ENCODE measurements at regions of chr2 and their contacts with region 1.

Region 1: DNA sequence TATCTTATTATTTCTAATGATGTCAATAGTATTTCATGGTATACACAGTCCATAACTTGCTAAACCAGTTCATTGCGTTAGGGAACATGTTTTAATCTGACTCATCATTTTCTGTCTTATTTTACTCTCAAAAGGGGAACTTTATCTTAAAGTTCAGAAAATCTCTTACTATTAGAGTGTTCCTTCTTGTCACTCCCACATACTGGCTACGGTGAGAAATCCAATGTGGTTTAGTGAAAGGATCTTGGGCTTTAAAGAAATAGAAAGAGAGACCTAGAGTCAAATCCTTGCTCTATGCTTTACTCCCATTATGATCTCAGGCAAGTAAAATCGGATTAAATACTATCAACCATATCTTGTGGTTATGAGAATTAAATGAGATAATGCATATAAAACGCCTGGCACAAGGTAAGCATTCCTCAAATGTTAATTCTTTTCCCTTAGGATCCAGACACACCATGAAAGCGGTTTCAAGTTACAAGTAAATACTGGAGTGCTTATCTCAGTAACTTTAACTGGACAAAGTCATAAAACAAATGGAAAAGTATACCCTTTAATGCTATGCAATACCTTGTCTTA is 576.0 kb downstream of the ARHGAP15 start:
- DNase-seq: no peak
- ATAC-seq: peak; percentile 35
- H3K4me3 Mint-ChIP-seq: no peak overlapping the region
- H3K27ac Mint-ChIP-seq: peak overlapping the region; percentile 25
- H3K4me1 Mint-ChIP-seq: peaks cover 43% of the 10 kb centered on the region
- H3K27me3 Mint-ChIP-seq: no peaks in the 10 kb centered on the region

Region 2: GRCh38 chr2:143345887-143346787 is 359.1 kb before region 1 on chr2:
- CTCF ChIA-PET with region 1: no interaction called
- POLR2A ChIA-PET with region 1: no interaction called
- intact Hi-C with region 1: no loop called
- DNase-seq: no peak
- ATAC-seq: no peak
- H3K4me3 Mint-ChIP-seq: no peak overlapping the region
- H3K27ac Mint-ChIP-seq: no peak overlapping the region
- H3K4me1 Mint-ChIP-seq: peaks cover 25% of the 10 kb centered on the region
- H3K27me3 Mint-ChIP-seq: no peaks in the 10 kb centered on the region

Region 3: DNA sequence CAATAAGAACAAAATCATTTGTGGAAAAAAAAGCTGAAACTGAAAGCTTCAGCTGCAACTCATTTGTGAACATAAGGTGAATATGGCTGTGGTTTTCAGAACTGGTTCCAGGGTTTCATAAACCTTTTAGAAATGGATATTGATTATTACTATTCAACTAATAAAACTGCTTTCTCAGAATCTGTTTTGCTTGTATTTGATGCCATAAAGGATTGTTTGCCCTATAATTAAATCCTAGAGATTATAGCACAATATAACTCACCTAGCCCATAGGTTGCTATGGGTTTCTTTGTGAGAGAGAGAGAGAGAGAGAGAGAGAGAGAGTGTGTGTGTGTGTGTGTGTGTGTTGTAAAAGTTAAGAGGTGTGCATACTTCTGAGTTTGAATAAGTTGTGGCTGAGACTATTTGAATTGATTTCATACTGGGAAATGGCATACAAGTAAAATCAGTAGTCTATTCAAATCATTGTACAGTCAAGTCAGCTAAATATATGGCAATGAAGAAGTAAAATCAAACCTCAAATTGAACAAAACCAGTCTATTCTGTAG is 236.8 kb before region 1 on chr2:
- CTCF ChIA-PET with region 1: no interaction called
- POLR2A ChIA-PET with region 1: no interaction called
- intact Hi-C with region 1: loop called (anchors 1 to 2 kb)
- DNase-seq: no peak
- ATAC-seq: peak; percentile 83
- H3K4me3 Mint-ChIP-seq: no peak overlapping the region
- H3K27ac Mint-ChIP-seq: peak overlapping the region; percentile 52
- H3K4me1 Mint-ChIP-seq: peaks cover 39% of the 10 kb centered on the region
- H3K27me3 Mint-ChIP-seq: no peaks in the 10 kb centered on the region

Region 4: GRCh38 chr2:143730155-143730952 is 25.2 kb after region 1 on chr2:
- CTCF ChIA-PET with region 1: no interaction called
- POLR2A ChIA-PET with region 1: no interaction called
- intact Hi-C with region 1: loop called (anchors 1 kb)
- DNase-seq: peak; percentile 45
- ATAC-seq: peak; percentile 94
- H3K4me3 Mint-ChIP-seq: peak overlapping the region; percentile 17
- H3K27ac Mint-ChIP-seq: peak overlapping the region; percentile 91
- H3K4me1 Mint-ChIP-seq: peaks cover 55% of the 10 kb centered on the region
- H3K27me3 Mint-ChIP-seq: no peaks in the 10 kb centered on the region

Region 5: GRCh38 chr2:143802871-143803650 is 97.9 kb after region 1 on chr2:
- CTCF ChIA-PET with region 1: no interaction called
- POLR2A ChIA-PET with region 1: no interaction called
- intact Hi-C with region 1: loop called in 1 of 2 experiments (anchors 1 kb)
- DNase-seq: no peak
- ATAC-seq: peak; percentile 71
- H3K4me3 Mint-ChIP-seq: no peak overlapping the region
- H3K27ac Mint-ChIP-seq: peak overlapping the region; percentile 57
- H3K4me1 Mint-ChIP-seq: peaks cover 9% of the 10 kb centered on the region
- H3K27me3 Mint-ChIP-seq: peaks cover 2% of the 10 kb centered on the region

Region 6: GRCh38 chr2:144198117-144198516 is 492.9 kb after region 1 on chr2:
- CTCF ChIA-PET with region 1: no interaction called
- POLR2A ChIA-PET with region 1: no interaction called
- intact Hi-C with region 1: loop called in 1 of 2 experiments (anchors 10 kb)
- DNase-seq: peak; percentile 16
- ATAC-seq: peak; percentile 17
- H3K4me3 Mint-ChIP-seq: no peak overlapping the region
- H3K27ac Mint-ChIP-seq: peak overlapping the region; percentile 87
- H3K4me1 Mint-ChIP-seq: peaks cover 64% of the 10 kb centered on the region
- H3K27me3 Mint-ChIP-seq: no peaks in the 10 kb centered on the region

Region 7: GRCh38 chr2:144583741-144584453 is 878.7 kb after region 1 on chr2:
- CTCF ChIA-PET with region 1: no interaction called
- POLR2A ChIA-PET with region 1: no interaction called
- intact Hi-C with region 1: loop called in 1 of 2 experiments (anchors 10 kb)
- DNase-seq: peak; percentile 18
- ATAC-seq: peak; percentile 88
- H3K4me3 Mint-ChIP-seq: peak overlapping the region; percentile 1
- H3K27ac Mint-ChIP-seq: peak overlapping the region; percentile 77
- H3K4me1 Mint-ChIP-seq: peaks cover 22% of the 10 kb centered on the region
- H3K27me3 Mint-ChIP-seq: peaks cover 23% of the 10 kb centered on the region

Measured in activated CD4-positive, alpha-beta T cell treated with anti-CD3 and anti-CD28 coated beads for 36 hours (primary cell).